ENCODE measurements at regions of chr22 and their contacts with region 1.

Region 1: DNA sequence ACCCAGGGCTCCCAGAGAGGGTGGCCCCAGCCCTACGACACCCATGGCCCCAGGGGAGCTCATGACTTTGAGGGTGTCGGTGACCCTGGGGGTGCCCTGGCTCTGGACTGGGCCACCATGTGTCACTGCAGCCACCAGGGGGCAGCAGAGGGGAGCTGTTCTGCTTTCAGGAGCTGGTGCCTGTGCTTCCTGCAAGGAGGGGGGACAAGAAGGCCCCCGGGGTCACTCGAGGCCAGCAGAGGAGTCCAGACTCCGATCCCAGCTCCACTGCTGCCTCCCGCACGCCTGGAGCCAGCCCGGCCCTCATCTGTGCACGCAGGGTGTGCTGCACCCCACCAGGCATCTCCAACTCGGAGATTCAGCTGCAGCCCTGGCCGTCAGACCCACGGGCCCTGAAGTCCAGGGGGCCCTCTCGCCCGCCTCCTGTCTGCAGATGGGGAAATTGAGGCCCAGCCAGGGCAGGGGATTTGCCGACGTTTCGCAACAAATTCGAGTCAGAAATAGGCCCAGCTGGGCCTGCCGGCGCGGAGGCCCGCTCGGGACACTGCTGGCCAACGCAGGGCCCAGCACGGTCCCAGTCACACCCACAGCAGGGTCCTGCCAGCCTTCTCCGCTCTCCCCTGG is 29.5 kb upstream of the WNT7B start:
- DNase-seq: peak; percentile 56 to 98
- H3K4me3 ChIP-seq: no peak overlapping the region
- H3K27ac ChIP-seq: no peak overlapping the region
- H3K4me1 ChIP-seq: no peaks in the 10 kb centered on the region; a peak in 1 of 7 replicates
- H3K27me3 ChIP-seq: no peaks in the 10 kb centered on the region
- CTCF ChIP-seq: peak; percentile 83 to 94 (median 93)
- EP300 ChIP-seq: no peak
- POLR2A ChIP-seq: no peak
- RAD21 ChIP-seq: peak; percentile 84 to 86

Region 2: DNA sequence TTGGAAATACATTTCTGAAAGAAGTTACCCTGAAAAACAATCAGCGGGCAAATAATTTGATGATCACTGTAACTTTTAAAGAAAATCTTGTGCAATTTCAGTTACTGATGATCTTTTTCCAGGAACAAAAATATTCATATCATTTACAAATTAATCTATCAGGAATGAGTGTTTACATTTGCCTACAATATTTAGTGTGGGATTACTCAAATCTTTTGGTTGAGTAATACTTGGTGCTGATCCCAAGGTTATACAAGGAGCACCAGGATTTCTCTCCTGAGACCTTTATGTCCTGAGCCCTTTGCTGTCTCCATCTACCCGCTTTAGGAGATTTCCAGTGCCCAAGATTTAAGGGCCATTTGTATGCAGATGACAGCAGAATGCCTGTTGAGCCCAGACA is 218.7 kb before region 1 on chr22:
- CTCF ChIA-PET with region 1: no interaction called
- POLR2A ChIA-PET with region 1: no interaction called
- DNase-seq: no peak
- H3K4me3 ChIP-seq: no peak overlapping the region
- H3K27ac ChIP-seq: no peak overlapping the region
- H3K4me1 ChIP-seq: peaks cover 0 to 5% (median 3%) of the 10 kb centered on the region in 4 experiments; a peak in 3 of 7 replicates
- H3K27me3 ChIP-seq: no peaks in the 10 kb centered on the region
- CTCF ChIP-seq: no peak
- EP300 ChIP-seq: no peak
- POLR2A ChIP-seq: no peak
- RAD21 ChIP-seq: no peak

Region 3: GRCh38 chr22:45823336-45823735 is 183.2 kb before region 1 on chr22:
- CTCF ChIA-PET with region 1: no interaction called
- POLR2A ChIA-PET with region 1: no interaction called
- DNase-seq: no peak
- H3K4me3 ChIP-seq: no peak overlapping the region
- H3K27ac ChIP-seq: no peak overlapping the region
- H3K4me1 ChIP-seq: no peaks in the 10 kb centered on the region
- H3K27me3 ChIP-seq: no peaks in the 10 kb centered on the region
- CTCF ChIP-seq: no peak
- EP300 ChIP-seq: no peak
- POLR2A ChIP-seq: no peak
- RAD21 ChIP-seq: no peak

Region 4: DNA sequence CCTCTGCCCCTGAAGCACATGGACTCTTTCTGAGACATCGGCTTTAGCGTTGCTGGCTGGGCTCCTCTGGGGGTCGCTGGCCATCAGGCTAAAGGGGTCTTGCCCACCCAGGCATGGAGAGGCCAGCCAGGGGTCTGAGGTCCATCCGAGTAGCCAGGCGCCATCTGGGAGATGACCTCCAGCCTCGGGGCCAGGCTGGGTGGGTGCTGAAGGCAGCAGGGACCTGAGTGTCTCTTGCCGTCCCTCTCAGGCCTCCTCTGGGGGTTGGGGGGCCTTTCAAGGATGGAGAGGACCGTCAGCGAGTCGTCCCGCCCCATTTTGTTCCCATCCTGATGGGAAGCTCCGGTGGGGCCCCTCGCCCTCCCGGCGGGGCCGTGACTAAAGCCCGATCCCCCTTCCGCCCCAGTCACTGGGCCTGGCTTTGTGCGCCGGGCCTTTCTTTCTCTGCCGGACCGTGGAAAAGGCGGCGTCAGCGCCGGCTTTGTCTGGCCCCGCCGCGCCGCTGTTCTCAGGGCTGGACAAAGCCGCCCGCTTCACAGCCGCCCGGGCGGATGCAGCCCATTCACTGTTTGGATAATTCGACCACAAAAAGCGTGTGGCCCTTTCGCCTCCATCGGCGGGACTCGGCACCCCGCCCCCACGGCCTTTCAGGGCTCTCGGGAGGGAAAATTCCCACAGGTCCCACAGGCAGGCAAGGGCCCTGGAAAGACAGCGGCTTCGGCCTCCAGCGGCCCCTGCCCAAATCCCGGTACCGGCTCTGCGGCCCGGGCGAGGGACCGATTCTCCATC is 117.0 kb before region 1 on chr22:
- CTCF ChIA-PET with region 1: no interaction called
- POLR2A ChIA-PET with region 1: no interaction called
- DNase-seq: no peak
- H3K4me3 ChIP-seq: no peak overlapping the region
- H3K27ac ChIP-seq: no peak overlapping the region
- H3K4me1 ChIP-seq: peaks cover 0 to 3% (median 0%) of the 10 kb centered on the region in 4 experiments; a peak in 1 of 7 replicates
- H3K27me3 ChIP-seq: peaks cover 0 to 2% (median 0%) of the 10 kb centered on the region in 4 experiments; a peak in 1 of 7 replicates
- CTCF ChIP-seq: no peak
- EP300 ChIP-seq: no peak
- POLR2A ChIP-seq: no peak
- RAD21 ChIP-seq: no peak

Region 5: DNA sequence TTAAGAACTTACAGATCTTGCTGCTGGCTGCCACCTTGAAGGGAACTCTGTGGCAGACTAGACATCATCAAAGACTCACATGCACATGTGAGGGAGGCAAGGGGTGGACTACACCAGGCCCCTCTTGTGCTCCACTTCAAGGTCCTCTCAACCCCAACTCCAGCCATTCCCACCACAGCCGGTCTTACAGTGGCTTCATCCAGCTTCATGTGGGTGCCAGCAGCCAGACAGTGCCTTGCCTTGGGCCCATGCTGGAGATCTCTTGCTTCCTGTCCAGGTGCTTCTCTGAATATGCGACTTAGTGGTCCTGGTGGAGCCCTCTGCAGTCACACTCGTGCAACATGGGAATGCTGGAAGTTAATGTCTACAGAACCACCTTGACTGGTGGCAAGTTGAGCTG is 15.1 kb after region 1 on chr22:
- CTCF ChIA-PET with region 1: interaction called, 35 read pairs
- POLR2A ChIA-PET with region 1: interaction called, 3 read pairs
- DNase-seq: no peak
- H3K4me3 ChIP-seq: no peak overlapping the region
- H3K27ac ChIP-seq: no peak overlapping the region
- H3K4me1 ChIP-seq: no peaks in the 10 kb centered on the region; a peak in 1 of 7 replicates
- H3K27me3 ChIP-seq: peaks cover 2 to 25% (median 16%) of the 10 kb centered on the region in 4 experiments
- CTCF ChIP-seq: no peak
- EP300 ChIP-seq: no peak
- POLR2A ChIP-seq: no peak
- RAD21 ChIP-seq: no peak

Region 6: GRCh38 chr22:46042786-46043185 is 36.3 kb after region 1 on chr22:
- CTCF ChIA-PET with region 1: interaction called, 46 read pairs
- POLR2A ChIA-PET with region 1: interaction called, 4 read pairs
- DNase-seq: no peak
- H3K4me3 ChIP-seq: no peak overlapping the region
- H3K27ac ChIP-seq: no peak overlapping the region
- H3K4me1 ChIP-seq: peaks cover 0 to 23% (median 8%) of the 10 kb centered on the region in 4 experiments; a peak in 6 of 7 replicates
- H3K27me3 ChIP-seq: peaks cover 8 to 29% (median 20%) of the 10 kb centered on the region in 4 experiments; a peak in 6 of 7 replicates
- CTCF ChIP-seq: no peak
- EP300 ChIP-seq: no peak
- POLR2A ChIP-seq: no peak
- RAD21 ChIP-seq: no peak

Region 7: DNA sequence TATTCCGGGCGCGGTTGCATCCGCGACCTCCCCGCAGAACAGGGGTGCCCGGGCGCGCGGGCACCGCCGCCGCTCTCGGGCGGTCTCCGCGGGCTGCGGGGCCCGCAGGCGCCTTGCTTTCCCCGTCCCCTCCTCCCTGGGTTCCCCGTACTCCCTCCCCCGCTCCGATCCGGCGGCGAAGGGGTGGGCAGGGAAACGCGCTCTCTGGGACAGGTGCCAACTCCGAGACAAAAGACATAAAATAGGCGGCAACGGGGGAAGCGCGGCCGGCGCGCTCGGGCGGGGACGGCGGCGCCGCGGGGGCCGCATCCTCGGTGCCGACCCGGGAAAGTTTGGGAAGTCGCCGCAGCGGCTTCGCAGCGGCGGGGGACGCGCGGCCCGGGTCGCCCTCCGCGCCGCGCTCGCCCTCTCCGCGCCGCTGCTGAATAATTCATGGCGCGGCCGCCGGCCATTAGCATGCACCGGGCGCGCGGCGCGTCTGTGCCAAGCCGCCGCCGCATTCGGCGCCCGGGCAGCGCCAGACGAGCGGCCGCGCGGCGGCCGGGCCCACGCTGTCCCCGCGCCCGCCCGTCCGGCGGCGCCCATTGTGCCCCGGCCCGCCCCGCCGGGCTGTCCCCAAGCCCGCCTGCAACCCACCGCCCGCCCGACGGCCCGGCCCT is 65.1 kb after region 1 on chr22:
- CTCF ChIA-PET with region 1: interaction called, 11 read pairs
- POLR2A ChIA-PET with region 1: interaction called, 4 read pairs
- DNase-seq: peak in 1 of 2 experiments; percentile 76
- H3K4me3 ChIP-seq: peak overlapping the region; percentile 47 to 73 (median 56)
- H3K27ac ChIP-seq: no peak overlapping the region
- H3K4me1 ChIP-seq: peaks cover 0 to 36% (median 26%) of the 10 kb centered on the region in 4 experiments; a peak in 6 of 7 replicates
- H3K27me3 ChIP-seq: peaks cover 8 to 48% (median 35%) of the 10 kb centered on the region in 4 experiments
- CTCF ChIP-seq: no peak
- EP300 ChIP-seq: no peak
- POLR2A ChIP-seq: no peak
- RAD21 ChIP-seq: no peak

Region 8: GRCh38 chr22:46116491-46116958 is 110.0 kb after region 1 on chr22:
- CTCF ChIA-PET with region 1: interaction called, 147 read pairs
- POLR2A ChIA-PET with region 1: interaction called, 4 read pairs
- DNase-seq: peak; percentile 67 to 96
- H3K4me3 ChIP-seq: no peak overlapping the region
- H3K27ac ChIP-seq: no peak overlapping the region
- H3K4me1 ChIP-seq: peaks cover 0 to 8% (median 7%) of the 10 kb centered on the region in 4 experiments; a peak in 4 of 7 replicates
- H3K27me3 ChIP-seq: no peaks in the 10 kb centered on the region; a peak in 2 of 7 replicates
- CTCF ChIP-seq: peak; percentile 75 to 99 (median 93)
- EP300 ChIP-seq: no peak
- POLR2A ChIP-seq: no peak
- RAD21 ChIP-seq: peak; percentile 94 to 96

Measured in H1 (cell line).